T-cell (primary cell): ENCODE measurements at regions of chr1 and their contacts with region 1.

Region 1: DNA sequence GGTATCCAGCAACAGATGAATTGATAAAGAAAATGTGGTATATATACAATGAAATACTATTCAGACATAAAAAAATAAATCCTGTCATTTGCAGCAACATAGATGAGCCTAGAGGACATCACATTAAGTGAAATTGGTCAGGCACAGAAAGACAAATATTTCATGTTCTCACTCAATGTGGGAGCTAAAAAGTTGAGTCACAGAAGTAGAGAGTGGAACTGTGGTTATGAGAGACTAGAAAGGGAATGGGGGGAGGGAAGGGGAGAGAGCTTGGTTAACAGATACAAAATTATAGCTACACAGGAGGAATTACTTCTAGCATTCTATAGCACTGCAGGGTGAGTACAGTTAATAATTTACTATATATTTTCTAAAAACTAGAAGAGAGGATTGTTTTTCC is 37.1 kb upstream of the SERPINC1 start:
- DNase-seq: no peak
- ATAC-seq: no peak
- H3K4me3 ChIP-seq: no peak overlapping the region
- H3K4me3 Mint-ChIP-seq: no peak overlapping the region
- H3K27ac ChIP-seq: no peak overlapping the region
- H3K27ac Mint-ChIP-seq: peak overlapping the region in 1 of 2 donors; percentile 24
- H3K4me1 ChIP-seq: no peaks in the 10 kb centered on the region
- H3K4me1 Mint-ChIP-seq: peaks cover 0 to 14% (median 13%) of the 10 kb centered on the region in 3 donors
- H3K27me3 ChIP-seq: no peaks in the 10 kb centered on the region
- H3K27me3 Mint-ChIP-seq: no peaks in the 10 kb centered on the region

Region 2: GRCh38 chr1:173818459-173818858 is 135.7 kb before region 1 on chr1:
- CTCF ChIA-PET with region 1: no interaction called
- POLR2A ChIA-PET with region 1: no interaction called
- DNase-seq: no peak
- ATAC-seq: no peak
- H3K4me3 ChIP-seq: no peak overlapping the region
- H3K4me3 Mint-ChIP-seq: no peak overlapping the region
- H3K27ac ChIP-seq: no peak overlapping the region
- H3K27ac Mint-ChIP-seq: no peak overlapping the region
- H3K4me1 ChIP-seq: peaks cover 2 to 6% of the 10 kb centered on the region in 2 experiments
- H3K4me1 Mint-ChIP-seq: peaks cover 43 to 51% (median 50%) of the 10 kb centered on the region in 3 donors
- H3K27me3 ChIP-seq: no peaks in the 10 kb centered on the region
- H3K27me3 Mint-ChIP-seq: no peaks in the 10 kb centered on the region

Region 3: GRCh38 chr1:173970252-173970651 is 16.1 kb after region 1 on chr1:
- CTCF ChIA-PET with region 1: interaction called, 3 to 11 read pairs
- POLR2A ChIA-PET with region 1: interaction called in 1 of 2 experiments, 5 read pairs
- DNase-seq: no peak
- ATAC-seq: no peak
- H3K4me3 ChIP-seq: no peak overlapping the region
- H3K4me3 Mint-ChIP-seq: no peak overlapping the region
- H3K27ac ChIP-seq: no peak overlapping the region
- H3K27ac Mint-ChIP-seq: no peak overlapping the region
- H3K4me1 ChIP-seq: no peaks in the 10 kb centered on the region
- H3K4me1 Mint-ChIP-seq: peaks cover 0 to 3% (median 0%) of the 10 kb centered on the region in 3 donors
- H3K27me3 ChIP-seq: no peaks in the 10 kb centered on the region
- H3K27me3 Mint-ChIP-seq: no peaks in the 10 kb centered on the region